ENCODE measurements at regions of chr6 and their contacts with region 1.

Region 1: DNA sequence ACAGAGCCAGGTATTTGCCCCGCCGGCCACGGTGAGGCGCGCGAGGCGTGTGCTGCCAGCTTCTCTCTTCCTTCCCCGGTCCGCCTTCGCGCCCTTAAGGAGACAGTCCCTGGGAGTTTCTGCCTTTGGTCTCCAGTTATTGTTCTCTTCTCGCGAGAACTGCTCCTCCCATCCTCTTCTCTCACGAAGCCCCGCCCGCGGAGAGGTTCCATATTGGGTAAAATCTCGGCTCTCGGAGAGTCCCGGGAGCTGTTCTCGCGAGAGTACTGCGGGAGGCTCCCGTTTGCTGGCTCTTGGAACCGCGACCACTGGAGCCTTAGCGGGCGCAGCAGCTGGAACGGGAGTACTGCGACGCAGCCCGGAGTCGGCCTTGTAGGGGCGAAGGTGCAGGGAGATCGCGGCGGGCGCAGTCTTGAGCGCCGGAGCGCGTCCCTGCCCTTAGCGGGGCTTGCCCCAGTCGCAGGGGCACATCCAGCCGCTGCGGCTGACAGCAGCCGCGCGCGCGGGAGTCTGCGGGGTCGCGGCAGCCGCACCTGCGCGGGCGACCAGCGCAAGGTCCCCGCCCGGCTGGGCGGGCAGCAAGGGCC is at the start of gene MAPK14:
- DNase-seq: peak; percentile 99
- ATAC-seq: peak; percentile 96
- total RNA-seq, gene MAPK14: 29.3 TPM

Region 2: GRCh38 chr6:35583893-35584688 is 443.5 kb before region 1 on chr6:
- intact Hi-C with region 1: no loop called
- DNase-seq: no peak
- ATAC-seq: peak; percentile 78

Region 3: GRCh38 chr6:35731736-35732532 is 295.7 kb before region 1 on chr6:
- intact Hi-C with region 1: no loop called
- DNase-seq: peak; percentile 99
- ATAC-seq: peak; percentile 72

Region 4: GRCh38 chr6:35742797-35743196 is 284.8 kb before region 1 on chr6:
- intact Hi-C with region 1: no loop called
- DNase-seq: no peak
- ATAC-seq: no peak

Region 5: GRCh38 chr6:36094753-36095496 is 67.3 kb after region 1 on chr6:
- intact Hi-C with region 1: loop called (anchors 1 kb)
- DNase-seq: peak; percentile 91
- ATAC-seq: peak; percentile 93

Region 6: DNA sequence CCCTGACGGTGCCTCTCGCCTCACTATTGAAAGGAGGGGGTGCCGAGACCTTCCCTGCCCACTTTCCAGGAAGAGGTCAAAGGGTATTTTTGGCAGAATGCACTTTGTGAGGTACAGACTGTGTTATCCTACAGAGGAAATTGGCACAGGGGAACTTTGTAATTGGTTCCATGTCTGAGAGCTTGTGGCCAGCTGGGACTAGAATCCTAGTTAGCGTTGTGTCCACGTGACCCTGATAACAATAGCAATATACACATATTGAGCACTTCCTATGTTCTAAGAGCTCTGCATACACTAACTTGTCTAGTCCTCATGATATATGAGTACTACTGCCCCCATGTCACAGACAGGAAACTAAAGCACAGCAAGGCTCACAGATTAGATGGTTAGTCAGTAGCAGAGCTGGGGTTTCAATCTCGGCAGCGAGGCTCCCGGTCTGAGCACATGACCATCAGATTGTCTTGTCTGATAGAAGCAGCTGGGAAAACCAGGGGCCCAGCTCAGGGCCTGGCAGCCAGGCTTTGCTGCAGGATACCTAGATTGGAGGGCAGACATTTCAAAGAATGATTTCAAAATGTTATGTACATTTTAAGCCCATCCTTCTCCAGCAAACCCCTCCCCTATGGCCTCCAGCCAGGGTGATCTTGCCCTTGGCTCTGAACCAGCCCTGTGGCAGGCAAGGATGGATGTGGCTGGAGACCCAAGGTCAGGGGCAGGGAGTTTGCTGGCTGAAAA is 104.1 kb after region 1 on chr6:
- intact Hi-C with region 1: no loop called
- DNase-seq: no peak
- ATAC-seq: peak; percentile 41